A673 (cell line): ENCODE measurements at regions of chr15 and their contacts with region 1.

Region 1: GRCh38 chr15:99282121-99282520 is 30.8 kb downstream of the LRRC28 start:
- DNase-seq: no peak
- H3K4me3 ChIP-seq: no peak overlapping the region
- H3K27ac ChIP-seq: no peak overlapping the region
- H3K4me1 ChIP-seq: no peaks in the 10 kb centered on the region
- H3K27me3 ChIP-seq: no peaks in the 10 kb centered on the region
- CTCF ChIP-seq: no peak

Region 2: DNA sequence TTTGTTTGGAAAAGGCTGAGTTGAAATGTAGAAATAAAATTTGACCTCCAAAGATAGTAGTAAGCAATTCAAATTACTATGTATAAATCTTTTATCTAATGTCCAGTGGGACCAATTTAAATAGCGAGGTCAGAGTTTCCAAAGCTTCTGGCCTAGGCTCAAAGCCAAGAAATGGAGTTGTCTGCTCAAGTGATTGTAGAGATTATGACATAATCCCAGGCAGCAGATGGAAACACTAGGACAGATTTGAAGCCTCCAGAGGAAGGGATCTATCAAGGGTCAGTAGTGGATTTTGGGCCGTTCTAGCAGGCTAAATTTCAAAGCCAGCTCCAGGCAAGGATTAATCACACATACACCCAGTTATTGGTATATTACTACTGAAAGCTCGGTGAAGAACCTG is 1352.7 kb before region 1 on chr15:
- CTCF ChIA-PET with region 1: no interaction called
- POLR2A ChIA-PET with region 1: no interaction called
- intact Hi-C with region 1: no loop called
- DNase-seq: no peak
- H3K4me3 ChIP-seq: no peak overlapping the region
- H3K27ac ChIP-seq: no peak overlapping the region
- H3K4me1 ChIP-seq: no peaks in the 10 kb centered on the region
- H3K27me3 ChIP-seq: no peaks in the 10 kb centered on the region
- CTCF ChIP-seq: no peak

Region 3: GRCh38 chr15:99565299-99566156 is 283.4 kb after region 1 on chr15 and contains the start of gene MEF2A:
- CTCF ChIA-PET with region 1: no interaction called
- POLR2A ChIA-PET with region 1: no interaction called
- intact Hi-C with region 1: loop called (anchors 10 kb)
- DNase-seq: peak; percentile 96
- H3K4me3 ChIP-seq: peak within 1 kb of the TSS; percentile 88
- H3K27ac ChIP-seq: peak within 1 kb of the TSS; percentile 91
- H3K4me1 ChIP-seq: peaks cover 18% of the 10 kb centered on the region
- H3K27me3 ChIP-seq: no peaks in the 10 kb centered on the region
- CTCF ChIP-seq: no peak
- total RNA-seq, gene MEF2A: 26.4 and 29.5 TPM in 2 replicates

Region 4: DNA sequence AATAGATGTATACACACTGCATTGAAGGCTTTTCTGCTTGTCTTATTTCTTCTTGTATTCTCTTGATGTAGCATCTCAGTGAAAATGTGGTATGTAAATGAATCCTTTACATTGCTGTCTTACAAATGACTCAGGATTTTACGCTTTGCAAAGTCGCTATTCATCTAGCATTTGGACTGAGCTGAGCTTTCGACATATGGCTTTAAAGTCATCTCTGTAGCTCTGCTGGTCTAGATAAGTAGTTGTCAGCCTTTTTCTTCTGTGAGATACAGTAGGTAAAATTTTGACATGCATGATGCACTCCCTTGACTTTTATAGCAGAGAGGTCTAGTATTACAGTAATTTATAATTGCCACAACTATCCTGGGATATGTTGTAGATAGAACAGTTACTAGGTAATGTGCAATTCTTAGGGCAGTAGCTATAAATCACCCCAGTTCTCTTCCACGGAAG is 300.4 kb after region 1 on chr15:
- CTCF ChIA-PET with region 1: interaction called, 11 read pairs
- POLR2A ChIA-PET with region 1: no interaction called
- intact Hi-C with region 1: no loop called
- DNase-seq: peak; percentile 20
- H3K4me3 ChIP-seq: no peak overlapping the region
- H3K27ac ChIP-seq: no peak overlapping the region
- H3K4me1 ChIP-seq: peaks cover 11% of the 10 kb centered on the region
- H3K27me3 ChIP-seq: no peaks in the 10 kb centered on the region
- CTCF ChIP-seq: no peak